ENCODE measurements at regions of chr7 and their contacts with region 1.

Region 1: GRCh38 chr7:122770686-122771335 is 68.1 kb upstream of the RNF148 start:
- DNase-seq: no peak
- ATAC-seq: 0 out of 3 replicates have a peak, but pooled peaks have one; percentile 19
- H3K4me3 ChIP-seq: no peak overlapping the region
- H3K27ac ChIP-seq: no peak overlapping the region
- H3K4me1 ChIP-seq: no peaks in the 10 kb centered on the region
- H3K27me3 ChIP-seq: no peaks in the 10 kb centered on the region
- CTCF ChIP-seq: no peak
- EP300 ChIP-seq: no peak
- POLR2A ChIP-seq: no peak
- RAD21 ChIP-seq: no peak

Region 2: GRCh38 chr7:122658856-122659255 is 112.0 kb before region 1 on chr7:
- CTCF ChIA-PET with region 1: no interaction called
- POLR2A ChIA-PET with region 1: no interaction called
- RAD21 ChIA-PET with region 1: no interaction called
- SMC1A ChIA-PET with region 1: no interaction called
- in situ Hi-C with region 1: no loop called
- intact Hi-C with region 1: no loop called
- DNase-seq: no peak
- ATAC-seq: no peak
- H3K4me3 ChIP-seq: no peak overlapping the region
- H3K27ac ChIP-seq: no peak overlapping the region
- H3K4me1 ChIP-seq: no peaks in the 10 kb centered on the region
- H3K27me3 ChIP-seq: no peaks in the 10 kb centered on the region
- CTCF ChIP-seq: no peak
- EP300 ChIP-seq: no peak
- POLR2A ChIP-seq: no peak
- RAD21 ChIP-seq: no peak

Region 3: GRCh38 chr7:122736183-122736582 is 34.6 kb before region 1 on chr7:
- CTCF ChIA-PET with region 1: interaction called, 3 read pairs
- POLR2A ChIA-PET with region 1: no interaction called
- RAD21 ChIA-PET with region 1: interaction called, 3 read pairs
- SMC1A ChIA-PET with region 1: interaction called, 15 read pairs
- in situ Hi-C with region 1: no loop called
- intact Hi-C with region 1: no loop called
- DNase-seq: no peak
- ATAC-seq: peak; percentile 83
- H3K4me3 ChIP-seq: no peak overlapping the region
- H3K27ac ChIP-seq: no peak overlapping the region
- H3K4me1 ChIP-seq: no peaks in the 10 kb centered on the region
- H3K27me3 ChIP-seq: no peaks in the 10 kb centered on the region
- CTCF ChIP-seq: no peak
- EP300 ChIP-seq: 0 out of 4 replicates have a peak, but pooled peaks of 1 of the 2 experiments have one; percentile 5
- POLR2A ChIP-seq: no peak
- RAD21 ChIP-seq: no peak

Region 4: GRCh38 chr7:122758501-122758900 is 12.3 kb before region 1 on chr7:
- CTCF ChIA-PET with region 1: interaction called, 15 read pairs
- POLR2A ChIA-PET with region 1: no interaction called
- RAD21 ChIA-PET with region 1: interaction called, 5 read pairs
- SMC1A ChIA-PET with region 1: interaction called, 8 read pairs
- in situ Hi-C with region 1: no loop called
- intact Hi-C with region 1: no loop called
- DNase-seq: no peak
- ATAC-seq: peak; percentile 59
- H3K4me3 ChIP-seq: no peak overlapping the region
- H3K27ac ChIP-seq: no peak overlapping the region
- H3K4me1 ChIP-seq: no peaks in the 10 kb centered on the region
- H3K27me3 ChIP-seq: no peaks in the 10 kb centered on the region
- CTCF ChIP-seq: no peak
- EP300 ChIP-seq: no peak
- POLR2A ChIP-seq: no peak
- RAD21 ChIP-seq: no peak

Region 5: DNA sequence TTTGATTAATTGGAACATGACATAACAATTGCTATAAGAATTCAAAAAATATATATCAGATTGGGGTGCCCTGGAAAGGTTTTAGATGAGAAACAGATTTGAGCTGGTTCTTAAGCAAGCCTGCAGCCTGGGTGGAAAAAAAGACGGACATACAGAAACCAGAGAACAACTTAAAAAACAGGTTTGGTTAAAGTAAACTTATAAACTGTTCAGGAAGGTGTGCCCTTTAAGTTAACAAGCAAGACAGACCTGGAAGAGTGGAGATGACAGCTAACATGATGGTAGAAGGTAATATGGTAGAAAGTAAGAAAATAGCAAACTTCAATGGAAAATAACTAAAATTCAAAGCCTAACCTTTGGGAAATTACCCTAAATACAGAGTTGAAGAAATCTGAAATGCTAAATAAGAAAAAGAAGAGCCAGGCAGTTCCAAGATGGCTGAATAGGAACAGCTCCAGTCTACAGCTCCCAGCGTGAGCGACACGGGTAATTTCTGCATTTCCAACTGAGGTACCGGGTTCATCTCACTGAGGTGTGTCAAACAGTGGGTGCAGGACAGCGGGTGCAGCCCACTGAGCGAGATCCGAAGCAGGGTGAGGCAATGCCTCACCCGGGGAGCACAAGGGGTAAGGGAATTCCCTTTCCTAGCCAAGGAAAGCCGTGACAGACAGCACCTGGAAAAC is 63.2 kb after region 1 on chr7:
- CTCF ChIA-PET with region 1: no interaction called
- POLR2A ChIA-PET with region 1: no interaction called
- RAD21 ChIA-PET with region 1: no interaction called
- SMC1A ChIA-PET with region 1: no interaction called
- in situ Hi-C with region 1: no loop called
- intact Hi-C with region 1: no loop called
- DNase-seq: no peak
- ATAC-seq: no peak
- H3K4me3 ChIP-seq: no peak overlapping the region
- H3K27ac ChIP-seq: no peak overlapping the region
- H3K4me1 ChIP-seq: no peaks in the 10 kb centered on the region
- H3K27me3 ChIP-seq: no peaks in the 10 kb centered on the region
- CTCF ChIP-seq: no peak
- EP300 ChIP-seq: no peak
- POLR2A ChIP-seq: no peak
- RAD21 ChIP-seq: no peak

Measured in GM12878 (cell line).